SK-N-SH (cell line): ENCODE measurements at regions of chr9 and their contacts with region 1.

Region 1: DNA sequence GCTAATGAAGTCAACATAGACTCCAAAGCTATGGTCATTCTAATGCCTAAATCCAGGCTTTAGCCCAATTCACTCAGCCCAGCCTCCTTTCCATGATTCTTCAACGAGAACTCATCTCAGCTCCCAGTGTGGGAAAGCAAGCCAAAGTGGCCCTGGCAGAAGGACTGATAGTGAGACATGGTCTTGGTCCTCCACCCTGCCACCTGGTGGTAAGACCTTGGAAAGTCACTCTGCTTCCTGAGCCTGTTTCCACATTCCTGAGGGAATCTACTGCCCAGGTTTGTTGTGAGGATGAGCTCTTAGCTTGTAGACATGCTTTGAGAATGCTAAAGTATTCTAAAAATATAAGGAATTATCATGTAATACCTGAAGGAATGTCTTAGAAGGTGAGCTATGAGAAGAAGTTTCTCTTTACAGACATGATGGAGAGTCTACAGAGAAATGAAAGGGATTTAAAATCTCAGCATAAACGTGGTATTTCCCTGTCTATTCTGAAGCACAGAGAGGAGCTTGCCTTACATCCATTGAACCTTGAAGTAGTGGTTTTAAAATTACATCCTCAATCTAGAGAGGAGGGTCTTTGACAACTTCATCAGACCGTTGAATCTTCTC is 173.5 kb downstream of the TRIM32 start:
- DNase-seq: peak; percentile 64
- H3K4me3 ChIP-seq: no peak overlapping the region
- H3K27ac ChIP-seq: no peak overlapping the region
- H3K4me1 ChIP-seq: no peaks in the 10 kb centered on the region
- H3K27me3 ChIP-seq: no peaks in the 10 kb centered on the region
- CTCF ChIP-seq: peak; percentile 71
- EP300 ChIP-seq: no peak
- RAD21 ChIP-seq: peak; percentile 66

Region 2: DNA sequence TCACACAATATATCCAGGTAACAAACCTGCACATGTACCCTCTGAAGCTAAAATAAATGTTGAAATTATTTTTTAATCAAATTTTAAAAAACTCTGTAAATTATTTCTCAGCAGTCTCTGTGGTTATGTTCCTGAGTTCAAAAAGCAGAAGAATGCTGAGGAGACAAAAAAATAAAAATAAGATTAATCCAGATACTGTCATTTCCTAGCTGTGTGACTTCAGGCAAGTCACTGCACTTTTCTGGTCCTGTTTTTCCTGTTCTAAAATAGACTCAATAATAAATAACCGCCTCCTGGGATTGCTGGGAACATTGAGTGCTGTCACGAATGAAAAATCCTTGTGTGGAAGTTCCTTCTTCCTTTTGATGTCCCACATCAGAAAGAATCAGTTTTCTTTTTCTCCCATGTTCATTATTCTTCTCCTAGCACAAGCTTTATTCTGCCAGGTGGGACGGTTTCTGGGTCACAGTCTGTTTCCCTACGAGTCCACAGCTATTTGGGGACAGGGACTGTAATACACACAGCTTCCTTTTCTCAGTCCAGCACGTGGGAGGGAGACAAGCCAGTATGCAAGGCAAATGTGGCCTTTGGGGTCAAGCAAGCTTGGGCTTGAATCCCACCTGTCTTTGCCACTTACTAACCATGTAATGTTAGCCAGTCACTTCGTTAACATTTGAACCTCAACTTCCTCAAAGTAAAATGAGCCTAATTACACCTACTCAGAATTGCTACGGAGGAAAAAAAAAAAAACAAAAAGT is 16.6 kb before region 1 on chr9:
- CTCF ChIA-PET with region 1: interaction called, 11 read pairs
- POLR2A ChIA-PET with region 1: no interaction called
- DNase-seq: no peak
- H3K4me3 ChIP-seq: no peak overlapping the region
- H3K27ac ChIP-seq: no peak overlapping the region
- H3K4me1 ChIP-seq: no peaks in the 10 kb centered on the region
- H3K27me3 ChIP-seq: no peaks in the 10 kb centered on the region
- CTCF ChIP-seq: no peak
- EP300 ChIP-seq: no peak
- RAD21 ChIP-seq: no peak

Region 3: GRCh38 chr9:116891424-116891823 is 30.8 kb after region 1 on chr9:
- CTCF ChIA-PET with region 1: interaction called, 11 read pairs
- POLR2A ChIA-PET with region 1: no interaction called
- DNase-seq: no peak
- H3K4me3 ChIP-seq: no peak overlapping the region
- H3K27ac ChIP-seq: no peak overlapping the region
- H3K4me1 ChIP-seq: no peaks in the 10 kb centered on the region
- H3K27me3 ChIP-seq: no peaks in the 10 kb centered on the region
- CTCF ChIP-seq: no peak
- EP300 ChIP-seq: no peak
- RAD21 ChIP-seq: no peak

Region 4: DNA sequence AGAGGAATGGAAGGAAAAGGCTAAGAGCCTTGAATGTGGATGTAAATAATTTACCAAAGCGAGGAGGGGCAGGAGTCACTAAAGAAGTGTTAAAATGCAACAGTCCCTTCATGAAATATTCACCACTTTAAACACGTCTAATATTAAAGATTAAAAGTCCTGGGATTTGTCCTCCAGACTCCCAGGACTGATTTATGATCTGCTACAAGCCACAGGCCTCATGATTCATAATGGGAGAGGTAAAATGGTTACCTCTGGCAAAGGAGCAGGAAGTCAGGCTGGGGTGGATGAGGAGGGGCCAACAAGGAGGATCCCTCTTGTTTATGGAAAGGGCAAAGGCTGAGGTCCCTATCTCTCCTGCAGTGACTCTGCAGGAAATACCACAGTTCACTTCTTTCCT is 118.8 kb after region 1 on chr9:
- CTCF ChIA-PET with region 1: no interaction called
- POLR2A ChIA-PET with region 1: no interaction called
- DNase-seq: no peak
- H3K4me3 ChIP-seq: no peak overlapping the region
- H3K27ac ChIP-seq: no peak overlapping the region; a peak in 1 of 4 replicates
- H3K4me1 ChIP-seq: peaks cover 0 to 9% of the 10 kb centered on the region in 2 experiments; a peak in 2 of 4 replicates
- H3K27me3 ChIP-seq: no peaks in the 10 kb centered on the region
- CTCF ChIP-seq: no peak
- EP300 ChIP-seq: no peak
- RAD21 ChIP-seq: no peak